CD4-positive, alpha-beta memory T cell (primary cell): ENCODE measurements at regions of chr10 and their contacts with region 1.

Region 1: DNA sequence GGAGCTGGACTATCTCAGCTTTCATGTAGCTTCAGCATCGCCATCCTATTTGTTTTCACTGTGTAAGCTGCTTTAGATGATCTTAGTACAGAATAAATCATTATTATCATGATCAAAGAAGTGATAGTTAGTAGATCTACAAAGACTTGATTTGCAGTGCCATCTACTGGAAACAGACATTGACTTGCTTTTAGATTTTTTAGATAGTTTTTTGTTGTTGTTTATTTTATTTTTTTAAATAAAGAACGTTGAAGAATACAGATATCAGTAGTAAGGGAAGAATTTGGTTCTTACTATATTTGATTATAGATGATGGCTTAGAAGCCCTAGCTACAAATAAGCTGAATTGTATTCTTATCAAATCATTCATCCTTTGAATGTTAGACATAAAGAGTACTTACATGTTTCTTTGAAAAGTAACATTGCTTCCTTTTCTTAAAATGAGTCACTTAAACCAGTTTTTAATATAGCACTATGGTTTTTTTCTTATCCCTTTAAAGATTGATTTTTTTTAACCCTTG is 6.3 kb upstream of the SFMBT2 start:
- DNase-seq: peak in 4 of 5 donors; percentile 46 to 53 (median 50)
- H3K4me3 ChIP-seq: no peak overlapping the region
- H3K4me3 Mint-ChIP-seq: no peak overlapping the region
- H3K27ac ChIP-seq: no peak overlapping the region
- H3K27ac Mint-ChIP-seq: no peak overlapping the region
- H3K4me1 ChIP-seq: peaks cover 20% of the 10 kb centered on the region
- H3K4me1 Mint-ChIP-seq: peaks cover 8 to 16% (median 10%) of the 10 kb centered on the region in 4 donors
- H3K27me3 ChIP-seq: no peaks in the 10 kb centered on the region
- H3K27me3 Mint-ChIP-seq: no peaks in the 10 kb centered on the region

Region 2: GRCh38 chr10:6843481-6843881 is 573.7 kb before region 1 on chr10:
- CTCF ChIA-PET with region 1: interaction called, 3 read pairs
- POLR2A ChIA-PET with region 1: no interaction called
- intact Hi-C with region 1: loop called (anchors 5 kb)
- DNase-seq: no peak
- H3K4me3 ChIP-seq: no peak overlapping the region
- H3K4me3 Mint-ChIP-seq: no peak overlapping the region
- H3K27ac ChIP-seq: no peak overlapping the region
- H3K27ac Mint-ChIP-seq: no peak overlapping the region
- H3K4me1 ChIP-seq: no peaks in the 10 kb centered on the region
- H3K4me1 Mint-ChIP-seq: peaks cover 0 to 2% (median 0%) of the 10 kb centered on the region in 4 donors
- H3K27me3 ChIP-seq: no peaks in the 10 kb centered on the region
- H3K27me3 Mint-ChIP-seq: peaks cover 5 to 8% of the 10 kb centered on the region in 2 donors

Region 3: DNA sequence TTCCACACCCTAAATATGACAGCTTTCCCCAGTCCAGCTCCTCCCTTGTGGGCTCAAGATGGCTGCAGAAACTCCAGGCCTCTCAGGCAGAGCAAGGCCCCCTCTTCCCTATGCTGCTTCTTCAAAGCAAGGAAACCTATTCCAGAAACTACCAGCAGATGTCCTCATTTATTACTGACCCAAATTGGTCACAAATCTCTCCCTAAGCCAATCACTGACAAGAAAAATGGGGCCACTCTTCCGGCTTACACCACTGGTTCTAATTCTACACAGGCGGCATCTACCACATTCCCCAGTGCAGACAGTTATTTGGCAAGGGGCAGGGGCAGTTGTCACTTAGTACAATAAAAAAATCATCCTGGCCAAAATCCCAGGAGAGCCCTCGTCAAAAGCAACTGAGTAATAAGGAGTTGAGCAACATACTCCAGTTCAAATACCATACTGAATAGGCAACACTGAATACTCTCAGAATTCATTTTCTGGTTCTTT is 156.7 kb before region 1 on chr10:
- CTCF ChIA-PET with region 1: interaction called, 11 read pairs
- POLR2A ChIA-PET with region 1: interaction called, 12 read pairs
- intact Hi-C with region 1: loop called (anchors 1 kb)
- DNase-seq: peak in 4 of 5 donors; percentile 41 to 48 (median 43)
- H3K4me3 ChIP-seq: no peak overlapping the region
- H3K4me3 Mint-ChIP-seq: peak overlapping the region in 4 of 8 donors; percentile 1 to 78 (median 42)
- H3K27ac ChIP-seq: no peak overlapping the region
- H3K27ac Mint-ChIP-seq: peak overlapping the region in 6 of 7 donors; percentile 62 to 97 (median 84)
- H3K4me1 ChIP-seq: peaks cover 38% of the 10 kb centered on the region
- H3K4me1 Mint-ChIP-seq: peaks cover 34 to 52% (median 47%) of the 10 kb centered on the region in 4 donors
- H3K27me3 ChIP-seq: no peaks in the 10 kb centered on the region
- H3K27me3 Mint-ChIP-seq: no peaks in the 10 kb centered on the region